ENCODE measurements at regions of chr14 and their contacts with region 1.

Region 1: GRCh38 chr14:104932676-104933631 is 8.3 kb downstream of the PLD4 start:
- DNase-seq: peak; percentile 62 to 91 (median 83)
- ATAC-seq: peak; percentile 94
- H3K4me3 ChIP-seq: peak overlapping the region; percentile 20
- H3K4me3 Mint-ChIP-seq: peak overlapping the region in 8 of 10 donors; percentile 44 to 76 (median 64)
- H3K27ac ChIP-seq: peak overlapping the region; percentile 29
- H3K27ac Mint-ChIP-seq: no peak overlapping the region
- H3K4me1 ChIP-seq: peaks cover 0 to 4% of the 10 kb centered on the region in 2 donors
- H3K4me1 Mint-ChIP-seq: peaks cover 4 to 11% (median 8%) of the 10 kb centered on the region in 7 donors
- H3K27me3 ChIP-seq: no peaks in the 10 kb centered on the region
- H3K27me3 Mint-ChIP-seq: peaks cover 0 to 26% (median 4%) of the 10 kb centered on the region in 5 donors

Region 2: GRCh38 chr14:104985675-104986525 is 52.9 kb after region 1 on chr14 and contains the start of gene CLBA1:
- CTCF ChIA-PET with region 1: no interaction called
- POLR2A ChIA-PET with region 1: no interaction called
- intact Hi-C with region 1: loop called in 1 of 2 experiments (anchors 2 kb)
- DNase-seq: peak; percentile 81 to 90 (median 89)
- ATAC-seq: peak; percentile 96
- H3K4me3 ChIP-seq: peak within 1 kb of the TSS; percentile 56
- H3K4me3 Mint-ChIP-seq: peak within 1 kb of the TSS; percentile 64 to 86 (median 76)
- H3K27ac ChIP-seq: peak within 1 kb of the TSS; percentile 72
- H3K27ac Mint-ChIP-seq: peak within 1 kb of the TSS in 8 of 9 donors; percentile 74 to 89 (median 86)
- H3K4me1 ChIP-seq: no peaks in the 10 kb centered on the region
- H3K4me1 Mint-ChIP-seq: peaks cover 0 to 9% (median 4%) of the 10 kb centered on the region in 7 donors
- H3K27me3 ChIP-seq: no peaks in the 10 kb centered on the region
- H3K27me3 Mint-ChIP-seq: peaks cover 0 to 5% (median 4%) of the 10 kb centered on the region in 5 donors
- total RNA-seq, gene CLBA1: 0.51 to 2.1 (median 1.3) TPM

Region 3: GRCh38 chr14:105086833-105087307 is 153.9 kb after region 1 on chr14:
- CTCF ChIA-PET with region 1: no interaction called
- POLR2A ChIA-PET with region 1: no interaction called
- intact Hi-C with region 1: no loop called
- DNase-seq: peak; percentile 74 to 88 (median 84)
- ATAC-seq: peak; percentile 92
- H3K4me3 ChIP-seq: peak overlapping the region; percentile 63
- H3K4me3 Mint-ChIP-seq: peak overlapping the region; percentile 64 to 83 (median 78)
- H3K27ac ChIP-seq: peak overlapping the region; percentile 55
- H3K27ac Mint-ChIP-seq: peak overlapping the region in 8 of 9 donors; percentile 3 to 84 (median 55)
- H3K4me1 ChIP-seq: peaks cover 4 to 7% of the 10 kb centered on the region in 2 donors
- H3K4me1 Mint-ChIP-seq: peaks cover 8 to 22% (median 13%) of the 10 kb centered on the region in 7 donors
- H3K27me3 ChIP-seq: no peaks in the 10 kb centered on the region
- H3K27me3 Mint-ChIP-seq: peaks cover 0 to 27% (median 0%) of the 10 kb centered on the region in 5 donors

Region 4: GRCh38 chr14:106024983-106025604 is 1092.1 kb after region 1 on chr14:
- CTCF ChIA-PET with region 1: no interaction called
- POLR2A ChIA-PET with region 1: no interaction called
- intact Hi-C with region 1: no loop called
- DNase-seq: peak in 4 of 9 donors; percentile 28 to 61 (median 42)
- ATAC-seq: peak; percentile 71
- H3K4me3 ChIP-seq: no peak overlapping the region
- H3K4me3 Mint-ChIP-seq: peak overlapping the region in 4 of 10 donors; percentile 30 to 49 (median 40)
- H3K27ac ChIP-seq: no peak overlapping the region
- H3K27ac Mint-ChIP-seq: peak overlapping the region in 5 of 9 donors; percentile 5 to 72 (median 44)
- H3K4me1 ChIP-seq: peaks cover 0 to 9% of the 10 kb centered on the region in 2 donors
- H3K4me1 Mint-ChIP-seq: peaks cover 0 to 48% (median 17%) of the 10 kb centered on the region in 7 donors
- H3K27me3 ChIP-seq: no peaks in the 10 kb centered on the region
- H3K27me3 Mint-ChIP-seq: peaks cover 0 to 5% (median 0%) of the 10 kb centered on the region in 5 donors

Measured in naive thymus-derived CD4-positive, alpha-beta T cell (primary cell).